ENCODE measurements at regions of chrX and their contacts with region 1.

Region 1: GRCh38 chrX:106939566-106939965 is 19.4 kb downstream of the CLDN2 start:
- DNase-seq: no peak
- H3K4me3 ChIP-seq: no peak overlapping the region
- H3K4me3 Mint-ChIP-seq: no peak overlapping the region
- H3K27ac Mint-ChIP-seq: no peak overlapping the region
- H3K4me1 ChIP-seq: peaks cover 7% of the 10 kb centered on the region; the same call in 1 of the 2 replicates
- H3K4me1 Mint-ChIP-seq: no peaks in the 10 kb centered on the region
- H3K27me3 ChIP-seq: no peaks in the 10 kb centered on the region
- H3K27me3 Mint-ChIP-seq: no peaks in the 10 kb centered on the region
- CTCF ChIP-seq: no peak

Region 2: DNA sequence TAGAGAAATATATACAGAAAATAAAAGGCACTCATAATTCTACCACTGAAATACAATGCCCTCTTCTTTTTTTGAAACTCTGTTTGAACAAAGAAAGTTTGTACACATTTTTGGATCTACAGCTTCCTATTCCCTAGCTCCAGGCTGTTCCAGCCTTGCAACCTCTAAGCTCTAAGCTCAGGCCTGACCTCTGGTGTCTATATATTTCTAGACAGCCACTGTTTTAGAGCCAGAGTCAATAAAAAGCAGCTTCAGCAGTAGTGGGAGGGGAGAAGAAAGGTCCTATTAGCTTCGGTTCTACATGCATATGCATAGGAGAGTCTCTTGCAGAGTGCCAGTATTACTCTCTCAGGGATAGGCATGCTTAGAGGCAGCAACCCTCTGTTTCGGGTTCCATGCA is 20.3 kb after region 1 on chrX:
- CTCF ChIA-PET with region 1: no interaction called
- POLR2A ChIA-PET with region 1: no interaction called
- intact Hi-C with region 1: loop called (anchors 1 kb)
- DNase-seq: peak; percentile 38 to 49
- H3K4me3 ChIP-seq: no peak overlapping the region
- H3K4me3 Mint-ChIP-seq: no peak overlapping the region
- H3K27ac Mint-ChIP-seq: no peak overlapping the region
- H3K4me1 ChIP-seq: peaks cover 11% of the 10 kb centered on the region
- H3K4me1 Mint-ChIP-seq: peaks cover 11% of the 10 kb centered on the region
- H3K27me3 ChIP-seq: no peaks in the 10 kb centered on the region
- H3K27me3 Mint-ChIP-seq: no peaks in the 10 kb centered on the region
- CTCF ChIP-seq: peak; percentile 23 to 24

Region 3: DNA sequence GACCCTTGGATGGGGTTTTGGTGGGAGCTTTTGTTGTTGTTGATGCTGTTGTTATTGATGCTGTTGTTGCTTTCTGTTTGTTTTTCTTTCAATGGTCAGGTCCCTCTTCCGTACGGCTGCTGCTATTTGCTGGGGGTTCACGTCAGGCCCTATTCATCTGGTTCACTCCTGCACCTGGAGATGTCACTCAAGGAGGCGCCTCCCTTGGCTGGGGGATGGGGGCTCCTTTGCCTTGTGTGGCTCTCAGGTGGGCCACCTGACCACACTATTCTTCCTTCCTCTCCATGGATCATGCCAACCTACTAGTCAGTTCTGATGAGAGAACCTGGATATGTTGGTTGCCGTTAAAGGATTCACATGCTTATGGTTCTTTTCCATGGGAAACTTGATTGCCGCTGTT is 649.7 kb after region 1 on chrX:
- CTCF ChIA-PET with region 1: no interaction called
- POLR2A ChIA-PET with region 1: no interaction called
- intact Hi-C with region 1: no loop called
- DNase-seq: no peak
- H3K4me3 ChIP-seq: no peak overlapping the region
- H3K4me3 Mint-ChIP-seq: no peak overlapping the region
- H3K27ac Mint-ChIP-seq: no peak overlapping the region
- H3K4me1 ChIP-seq: no peaks in the 10 kb centered on the region
- H3K4me1 Mint-ChIP-seq: no peaks in the 10 kb centered on the region
- H3K27me3 ChIP-seq: no peaks in the 10 kb centered on the region
- H3K27me3 Mint-ChIP-seq: peaks cover 16% of the 10 kb centered on the region
- CTCF ChIP-seq: no peak